ENCODE measurements at regions of chr10 and their contacts with region 1.

Region 1: GRCh38 chr10:61188691-61189090 is 244.7 kb upstream of the RHOBTB1 start:
- DNase-seq: no peak
- ATAC-seq: no peak
- H3K4me3 ChIP-seq: no peak overlapping the region
- H3K27ac ChIP-seq: no peak overlapping the region
- H3K4me1 ChIP-seq: peaks cover 0 to 9% (median 0%) of the 10 kb centered on the region in 12 donors
- H3K27me3 ChIP-seq: no peaks in the 10 kb centered on the region
- CTCF ChIP-seq: no peak
- POLR2A ChIP-seq: no peak

Region 2: DNA sequence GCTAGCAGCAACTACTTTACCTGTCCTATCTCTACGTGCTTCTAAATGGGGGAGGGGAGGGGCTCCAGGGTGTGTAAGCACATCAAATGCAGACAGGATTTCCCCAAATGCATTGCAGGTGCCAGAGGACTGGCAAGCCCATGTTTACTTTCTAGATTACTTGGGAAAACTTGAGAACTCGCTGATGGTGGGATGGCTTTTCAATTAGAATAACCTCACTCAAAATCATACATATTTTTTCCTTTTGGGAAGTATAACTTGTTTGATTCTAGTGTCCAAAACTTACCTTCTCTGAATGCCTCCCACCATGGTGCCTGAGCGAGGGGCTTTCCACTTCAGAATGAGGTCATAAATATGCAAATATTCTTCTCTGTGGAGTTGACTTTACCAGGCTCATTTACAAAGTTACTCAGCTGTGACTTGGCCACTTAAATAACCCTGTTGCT is 53.4 kb before region 1 on chr10:
- intact Hi-C with region 1: loop called in 8 of 10 experiments (anchors 2 to 5 kb)
- DNase-seq: no peak
- ATAC-seq: no peak
- H3K4me3 ChIP-seq: no peak overlapping the region
- H3K27ac ChIP-seq: no peak overlapping the region
- H3K4me1 ChIP-seq: peaks cover 0 to 14% (median 0%) of the 10 kb centered on the region in 12 donors
- H3K27me3 ChIP-seq: no peaks in the 10 kb centered on the region
- CTCF ChIP-seq: no peak
- POLR2A ChIP-seq: no peak

Region 3: GRCh38 chr10:61140765-61141392 is 47.8 kb before region 1 on chr10:
- intact Hi-C with region 1: loop called in 8 of 10 experiments (anchors 2 to 5 kb)
- DNase-seq: peak in 2 of 5 donors; percentile 28 to 33
- ATAC-seq: peak; percentile 37 to 75 (median 66)
- H3K4me3 ChIP-seq: no peak overlapping the region
- H3K27ac ChIP-seq: no peak overlapping the region
- H3K4me1 ChIP-seq: peaks cover 0 to 18% (median 2%) of the 10 kb centered on the region in 12 donors
- H3K27me3 ChIP-seq: no peaks in the 10 kb centered on the region
- CTCF ChIP-seq: peak; percentile 59 to 83 (median 76)
- POLR2A ChIP-seq: no peak

Region 4: GRCh38 chr10:61153771-61154170 is 34.9 kb before region 1 on chr10:
- intact Hi-C with region 1: loop called in 1 of 10 experiments (anchors 5 kb)
- DNase-seq: no peak
- ATAC-seq: no peak
- H3K4me3 ChIP-seq: no peak overlapping the region
- H3K27ac ChIP-seq: no peak overlapping the region
- H3K4me1 ChIP-seq: no peaks in the 10 kb centered on the region
- H3K27me3 ChIP-seq: no peaks in the 10 kb centered on the region
- CTCF ChIP-seq: no peak
- POLR2A ChIP-seq: no peak

Region 5: GRCh38 chr10:61319386-61320256 is 130.9 kb after region 1 on chr10:
- intact Hi-C with region 1: no loop called
- DNase-seq: no peak
- ATAC-seq: no peak
- H3K4me3 ChIP-seq: no peak overlapping the region
- H3K27ac ChIP-seq: no peak overlapping the region
- H3K4me1 ChIP-seq: no peaks in the 10 kb centered on the region
- H3K27me3 ChIP-seq: peaks cover 0 to 7% (median 0%) of the 10 kb centered on the region in 9 donors
- CTCF ChIP-seq: no peak
- POLR2A ChIP-seq: no peak